Activated T-helper 2 cell treated with anti-CD3 and anti-CD28 coated beads, Interferon-gamma antibody, Interleukin-2, Interleukin-4, amounts not matched to agents 10 μg/mL and 5 μg/mL and 100 μg/mL, durations not matched to agents 14 hours and 24 hours and 36 hours (primary cell): ENCODE measurements at regions of chr5 and their contacts with region 1.

Region 1: DNA sequence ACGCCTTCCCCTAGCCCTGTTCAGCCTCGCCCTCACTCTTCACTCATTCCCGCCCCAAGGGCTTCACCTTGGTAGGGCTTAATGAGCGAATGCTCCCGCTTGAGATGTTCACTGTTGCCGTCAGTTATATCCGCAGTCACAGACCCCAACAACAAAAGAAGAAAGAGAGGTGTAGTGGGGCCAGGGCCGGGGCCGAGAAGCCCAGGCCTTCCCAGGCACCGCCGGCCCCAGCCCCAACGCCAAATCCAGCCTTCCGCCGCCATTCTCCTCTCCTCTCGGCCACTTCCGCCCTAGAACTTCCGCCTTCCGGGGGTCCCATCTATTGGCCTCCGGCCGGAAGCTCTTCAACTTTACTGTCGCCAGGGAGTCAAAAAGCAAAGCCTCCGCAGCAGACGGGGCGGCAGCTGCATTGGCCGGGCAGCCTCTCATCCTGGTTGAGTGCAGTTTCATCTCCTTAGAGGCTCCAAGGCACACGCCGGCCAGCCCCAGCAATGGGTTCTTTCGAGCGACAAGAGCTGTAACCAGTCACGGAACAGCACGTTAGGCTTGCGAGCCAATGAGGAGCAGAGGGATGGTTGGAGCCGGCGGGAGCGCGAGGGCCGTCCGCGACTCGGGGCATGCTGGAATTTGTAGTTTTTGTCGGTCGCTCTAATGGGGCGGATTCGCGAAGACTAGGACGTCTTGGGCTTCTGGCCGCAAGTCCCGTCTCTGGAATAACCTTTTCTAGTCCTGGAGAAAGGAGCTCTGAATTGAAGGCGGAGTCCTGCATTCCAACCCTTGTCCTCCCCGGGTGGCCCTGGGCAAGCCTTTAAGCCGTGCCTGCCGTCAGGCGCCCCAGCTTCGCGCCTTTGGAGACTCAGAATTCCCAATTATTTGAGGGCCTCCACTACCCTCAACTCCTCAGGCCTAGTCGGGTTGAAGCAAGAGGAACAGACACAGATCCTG is at the start of gene LMAN2:
- DNase-seq: peak; percentile 92
- H3K4me3 Mint-ChIP-seq: peak within 1 kb of the TSS; percentile 95
- H3K27ac Mint-ChIP-seq: peak within 1 kb of the TSS; percentile 100
- H3K4me1 Mint-ChIP-seq: peaks cover 44% of the 10 kb centered on the region
- H3K27me3 Mint-ChIP-seq: no peaks in the 10 kb centered on the region
- total RNA-seq, gene LMAN2: 130 and 137 TPM in 2 replicates

Region 2: GRCh38 chr5:177362610-177363507 is 11.2 kb after region 1 on chr5:
- intact Hi-C with region 1: loop called (anchors 1 kb)
- DNase-seq: peak; percentile 44
- H3K4me3 Mint-ChIP-seq: peak overlapping the region; percentile 64
- H3K27ac Mint-ChIP-seq: peak overlapping the region; percentile 43
- H3K4me1 Mint-ChIP-seq: peaks cover 51% of the 10 kb centered on the region
- H3K27me3 Mint-ChIP-seq: no peaks in the 10 kb centered on the region

Region 3: GRCh38 chr5:177607452-177608192 is 256.0 kb after region 1 on chr5:
- intact Hi-C with region 1: no loop called
- DNase-seq: peak; percentile 53
- H3K4me3 Mint-ChIP-seq: no peak overlapping the region
- H3K27ac Mint-ChIP-seq: no peak overlapping the region
- H3K4me1 Mint-ChIP-seq: peaks cover 2% of the 10 kb centered on the region
- H3K27me3 Mint-ChIP-seq: no peaks in the 10 kb centered on the region